ENCODE measurements at regions of chr15 and their contacts with region 1.

Region 1: DNA sequence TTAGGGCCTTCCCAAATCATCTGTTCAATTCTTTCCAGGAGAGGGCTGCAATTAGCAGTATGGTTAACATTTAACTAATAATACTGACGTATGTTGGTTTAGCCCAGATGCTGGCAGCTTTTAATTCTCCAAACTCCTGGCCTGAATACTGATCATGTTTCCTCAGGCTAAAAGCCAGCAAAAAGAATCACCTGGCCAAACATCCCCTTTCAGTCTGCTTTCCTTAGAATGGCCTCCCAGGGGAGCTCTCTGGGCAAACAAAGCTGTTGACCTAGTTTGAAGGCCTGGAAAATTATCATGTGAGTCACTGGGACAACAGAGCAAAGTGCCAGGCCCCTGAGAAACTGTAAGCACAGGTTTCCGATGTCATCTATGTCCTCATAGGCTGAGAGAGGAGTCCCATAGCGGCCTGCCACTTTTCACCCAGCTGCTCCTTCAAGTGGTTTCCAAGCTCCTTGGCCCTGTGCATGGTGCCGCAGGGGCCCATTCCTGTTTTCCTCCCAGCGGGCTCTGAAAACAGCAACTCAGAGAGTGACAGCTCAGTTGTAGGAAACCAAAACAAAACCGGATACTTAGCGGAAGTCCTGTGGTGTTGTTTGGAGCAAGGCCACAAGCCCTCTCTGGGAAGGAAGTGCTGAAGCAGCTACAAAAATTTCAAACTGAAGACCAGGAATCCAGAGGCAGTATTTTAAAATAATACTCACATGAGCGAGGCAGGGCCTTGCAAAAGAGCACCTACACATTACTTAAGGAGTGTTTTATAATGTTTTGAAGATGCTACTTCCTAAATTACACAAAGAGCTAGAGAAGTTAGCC is 36.5 kb upstream of the RAB11A start:
- DNase-seq: peak; percentile 41
- H3K4me3 ChIP-seq: peak overlapping the region; percentile 27
- H3K27ac ChIP-seq: peak overlapping the region; percentile 86
- H3K27me3 ChIP-seq: no peaks in the 10 kb centered on the region
- CTCF ChIP-seq: peak; percentile 35; the same call in 1 of the 2 replicates

Region 2: DNA sequence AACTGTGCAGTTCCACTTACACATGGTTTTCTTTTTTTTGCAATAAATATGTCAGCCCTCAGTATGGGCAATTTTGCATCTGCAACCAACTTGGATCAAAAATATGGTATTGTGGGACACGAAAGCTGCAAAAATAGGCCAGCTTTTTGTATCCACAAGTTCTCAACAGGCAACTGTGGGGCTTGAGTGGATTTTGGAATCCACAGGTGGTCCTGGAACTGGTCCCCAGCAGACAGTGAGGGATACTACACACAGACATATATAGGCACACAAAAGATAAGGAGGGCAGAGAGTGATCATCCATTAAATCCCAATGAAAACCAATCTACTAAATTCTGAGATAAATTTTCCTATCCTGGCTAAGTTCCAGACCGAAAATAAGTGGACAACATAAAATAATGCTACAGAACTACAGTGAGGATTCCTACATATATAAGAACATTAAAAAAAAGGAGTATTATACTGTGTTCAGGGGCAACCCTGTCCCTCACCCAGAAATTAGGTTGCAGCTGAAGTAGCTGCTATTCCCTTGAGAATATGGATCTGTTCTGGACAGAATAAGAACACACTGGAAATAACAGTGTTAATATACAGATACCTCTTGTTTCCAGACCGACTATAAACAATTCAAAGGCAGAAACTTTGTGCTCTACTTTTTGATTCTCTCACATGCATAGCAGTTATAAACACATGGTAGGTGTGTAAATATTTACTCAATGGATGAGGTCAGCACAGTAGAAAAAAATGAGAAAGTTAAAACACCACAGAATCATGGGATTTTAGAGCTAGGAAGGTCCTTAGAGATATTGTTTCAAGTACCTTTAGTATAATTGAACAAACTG is 66.1 kb before region 1 on chr15:
- CTCF ChIA-PET with region 1: no interaction called
- POLR2A ChIA-PET with region 1: interaction called, 14 read pairs
- DNase-seq: peak; percentile 55
- H3K4me3 ChIP-seq: no peak overlapping the region
- H3K27ac ChIP-seq: peak overlapping the region; percentile 76
- H3K27me3 ChIP-seq: no peaks in the 10 kb centered on the region
- CTCF ChIP-seq: no peak

Region 3: GRCh38 chr15:66004618-66005262 is 172.0 kb after region 1 on chr15:
- CTCF ChIA-PET with region 1: no interaction called
- POLR2A ChIA-PET with region 1: no interaction called
- DNase-seq: no peak
- H3K4me3 ChIP-seq: no peak overlapping the region
- H3K27ac ChIP-seq: no peak overlapping the region
- H3K27me3 ChIP-seq: peaks cover 2% of the 10 kb centered on the region
- CTCF ChIP-seq: no peak

Region 4: GRCh38 chr15:66053991-66054390 is 221.2 kb after region 1 on chr15:
- CTCF ChIA-PET with region 1: no interaction called
- POLR2A ChIA-PET with region 1: no interaction called
- DNase-seq: no peak
- H3K4me3 ChIP-seq: no peak overlapping the region
- H3K27ac ChIP-seq: no peak overlapping the region
- H3K27me3 ChIP-seq: peaks cover 46% of the 10 kb centered on the region
- CTCF ChIP-seq: no peak

Measured in AG04450 (cell line).